ENCODE measurements at regions of chr13 and their contacts with region 1.

Region 1: GRCh38 chr13:79522583-79522982 is 41.6 kb downstream of the NDFIP2 start:
- DNase-seq: no peak
- H3K4me3 ChIP-seq: no peak overlapping the region
- H3K27ac ChIP-seq: no peak overlapping the region
- H3K4me1 ChIP-seq: peaks cover 9% of the 10 kb centered on the region; the same call in 1 of the 2 replicates
- H3K27me3 ChIP-seq: no peaks in the 10 kb centered on the region
- CTCF ChIP-seq: no peak

Region 2: GRCh38 chr13:79393564-79394249 is 128.9 kb before region 1 on chr13:
- CTCF ChIA-PET with region 1: no interaction called
- POLR2A ChIA-PET with region 1: interaction called, 13 read pairs
- intact Hi-C with region 1: no loop called
- DNase-seq: no peak
- H3K4me3 ChIP-seq: no peak overlapping the region
- H3K27ac ChIP-seq: no peak overlapping the region
- H3K4me1 ChIP-seq: 0 out of 2 replicates have a peak, but pooled peaks cover 7% of the 10 kb centered on the region
- H3K27me3 ChIP-seq: no peaks in the 10 kb centered on the region
- CTCF ChIP-seq: no peak